ENCODE measurements at regions of chr5 and their contacts with region 1.

Region 1: GRCh38 chr5:96595300-96596090 is 66.7 kb upstream of the CAST start:
- DNase-seq: peak in 2 of 9 experiments; percentile 36 to 39
- ATAC-seq: peak; percentile 31
- H3K4me3 ChIP-seq: no peak overlapping the region
- H3K4me3 Mint-ChIP-seq: no peak overlapping the region
- H3K27ac ChIP-seq: no peak overlapping the region
- H3K27ac Mint-ChIP-seq: no peak overlapping the region
- H3K4me1 ChIP-seq: no peaks in the 10 kb centered on the region
- H3K4me1 Mint-ChIP-seq: no peaks in the 10 kb centered on the region
- H3K27me3 ChIP-seq: no peaks in the 10 kb centered on the region
- H3K27me3 Mint-ChIP-seq: peaks cover 7% of the 10 kb centered on the region
- CTCF ChIP-seq: peak; percentile 54

Region 2: DNA sequence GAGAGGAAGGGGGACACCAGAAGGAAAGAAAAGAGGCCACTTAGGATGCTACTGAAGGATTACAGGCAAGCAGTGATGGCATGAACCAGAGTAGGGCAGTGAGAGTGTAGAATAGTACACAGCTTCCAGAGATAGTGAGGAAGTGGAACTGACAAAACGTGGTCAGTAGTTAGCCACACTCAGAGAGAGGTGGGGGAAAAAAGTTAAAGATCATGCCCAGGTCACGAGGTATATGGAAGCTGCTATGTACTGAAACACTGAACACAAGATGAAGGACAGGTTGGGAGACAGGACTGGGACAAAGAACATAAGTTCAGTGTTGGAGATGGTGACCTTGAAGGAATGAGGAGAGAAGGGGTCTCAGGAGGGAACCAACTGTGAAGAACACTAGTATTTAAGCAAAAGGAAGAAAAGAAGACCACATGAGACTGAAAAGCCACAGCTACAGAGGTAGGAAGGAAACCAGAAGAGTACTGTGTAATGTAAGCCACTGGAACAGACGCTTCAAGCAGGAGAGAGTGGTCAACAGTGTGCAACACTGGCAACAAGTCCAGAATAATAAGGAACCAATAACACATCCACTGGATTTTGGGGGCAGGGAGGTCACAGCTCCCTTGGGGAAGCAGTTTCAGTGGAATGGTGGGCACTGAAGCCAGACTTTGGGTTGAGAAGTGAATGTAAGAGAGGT is 679.4 kb before region 1 on chr5:
- CTCF ChIA-PET with region 1: no interaction called
- POLR2A ChIA-PET with region 1: no interaction called
- intact Hi-C with region 1: no loop called
- DNase-seq: peak in 1 of 9 experiments; percentile 24
- ATAC-seq: peak; percentile 24
- H3K4me3 ChIP-seq: no peak overlapping the region
- H3K4me3 Mint-ChIP-seq: no peak overlapping the region
- H3K27ac ChIP-seq: no peak overlapping the region
- H3K27ac Mint-ChIP-seq: no peak overlapping the region
- H3K4me1 ChIP-seq: peaks cover 7% of the 10 kb centered on the region
- H3K4me1 Mint-ChIP-seq: peaks cover 16% of the 10 kb centered on the region
- H3K27me3 ChIP-seq: no peaks in the 10 kb centered on the region
- H3K27me3 Mint-ChIP-seq: no peaks in the 10 kb centered on the region
- CTCF ChIP-seq: no peak

Region 3: GRCh38 chr5:96344678-96345577 is 250.6 kb before region 1 on chr5:
- CTCF ChIA-PET with region 1: interaction called, 125 read pairs
- POLR2A ChIA-PET with region 1: no interaction called
- intact Hi-C with region 1: no loop called
- DNase-seq: peak in 3 of 9 experiments; percentile 8 to 75 (median 70)
- ATAC-seq: peak; percentile 89
- H3K4me3 ChIP-seq: no peak overlapping the region
- H3K4me3 Mint-ChIP-seq: peak overlapping the region; percentile 2
- H3K27ac ChIP-seq: no peak overlapping the region
- H3K27ac Mint-ChIP-seq: no peak overlapping the region
- H3K4me1 ChIP-seq: peaks cover 12% of the 10 kb centered on the region
- H3K4me1 Mint-ChIP-seq: peaks cover 13% of the 10 kb centered on the region
- H3K27me3 ChIP-seq: peaks cover 0 to 2% of the 10 kb centered on the region in 2 experiments
- H3K27me3 Mint-ChIP-seq: peaks cover 4% of the 10 kb centered on the region
- CTCF ChIP-seq: peak; percentile 26

Region 4: DNA sequence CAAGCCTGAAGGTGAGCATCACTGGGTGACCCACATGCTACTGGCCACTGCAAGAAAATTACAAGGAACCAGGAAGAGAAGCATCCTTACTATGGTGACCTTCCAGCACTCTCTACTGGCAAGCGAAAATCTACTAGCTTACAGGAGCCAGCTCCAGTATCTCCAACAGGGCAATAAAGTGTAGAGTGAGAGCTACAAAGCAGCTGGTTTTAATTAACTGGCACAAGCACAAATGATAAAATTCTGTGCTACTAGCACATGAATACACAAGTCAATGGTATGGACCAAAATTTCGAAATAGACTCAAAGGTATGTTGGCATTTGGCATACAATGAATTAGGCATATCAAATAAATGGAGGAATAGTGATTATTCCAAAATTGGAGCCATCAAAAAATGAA is 46.5 kb before region 1 on chr5:
- CTCF ChIA-PET with region 1: no interaction called
- POLR2A ChIA-PET with region 1: no interaction called
- intact Hi-C with region 1: loop called in 1 of 2 experiments (anchors 10 kb)
- DNase-seq: no peak
- ATAC-seq: no peak
- H3K4me3 ChIP-seq: no peak overlapping the region
- H3K4me3 Mint-ChIP-seq: no peak overlapping the region
- H3K27ac ChIP-seq: no peak overlapping the region
- H3K27ac Mint-ChIP-seq: no peak overlapping the region
- H3K4me1 ChIP-seq: no peaks in the 10 kb centered on the region
- H3K4me1 Mint-ChIP-seq: no peaks in the 10 kb centered on the region
- H3K27me3 ChIP-seq: no peaks in the 10 kb centered on the region
- H3K27me3 Mint-ChIP-seq: peaks cover 3% of the 10 kb centered on the region
- CTCF ChIP-seq: no peak

Region 5: DNA sequence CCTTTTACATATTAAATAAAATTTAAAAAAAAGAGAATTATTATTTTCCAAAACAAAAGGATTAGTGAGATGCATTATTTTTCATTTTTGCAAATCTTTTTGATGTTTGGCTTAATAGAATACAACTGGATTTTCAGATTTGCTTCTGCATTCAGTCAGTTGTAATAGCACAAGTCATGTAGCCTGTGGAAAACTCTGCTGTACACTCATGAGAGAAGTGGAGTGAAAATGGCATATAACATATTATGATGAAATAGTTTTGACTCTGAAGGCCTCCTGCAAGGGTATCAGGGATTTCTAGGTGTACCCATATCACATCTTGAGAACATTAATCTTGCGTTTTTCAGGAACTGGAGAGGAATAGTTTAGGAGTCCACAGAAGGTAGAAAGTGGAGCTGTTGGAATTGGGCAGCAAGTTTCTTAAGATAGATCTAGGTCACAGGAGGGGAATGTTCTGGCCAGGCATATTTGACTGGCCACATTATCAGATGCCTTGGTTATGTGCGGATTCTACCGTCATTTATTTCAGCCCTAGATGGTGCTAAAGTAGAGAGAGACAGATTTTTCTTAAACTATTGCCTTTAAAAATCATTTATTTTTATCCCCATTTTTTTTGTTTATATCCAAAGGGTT is 356.7 kb after region 1 on chr5:
- CTCF ChIA-PET with region 1: no interaction called
- POLR2A ChIA-PET with region 1: no interaction called
- intact Hi-C with region 1: no loop called
- DNase-seq: no peak
- ATAC-seq: no peak
- H3K4me3 ChIP-seq: no peak overlapping the region
- H3K4me3 Mint-ChIP-seq: no peak overlapping the region
- H3K27ac ChIP-seq: no peak overlapping the region
- H3K27ac Mint-ChIP-seq: peak overlapping the region; percentile 86
- H3K4me1 ChIP-seq: peaks cover 53% of the 10 kb centered on the region
- H3K4me1 Mint-ChIP-seq: peaks cover 82% of the 10 kb centered on the region
- H3K27me3 ChIP-seq: no peaks in the 10 kb centered on the region
- H3K27me3 Mint-ChIP-seq: no peaks in the 10 kb centered on the region
- CTCF ChIP-seq: no peak